ENCODE measurements at regions of chr14 and their contacts with region 1.

Region 1: GRCh38 chr14:55160989-55161388 is 30.4 kb downstream of the DLGAP5 start:
- DNase-seq: no peak
- H3K4me3 Mint-ChIP-seq: no peak overlapping the region
- H3K27ac Mint-ChIP-seq: no peak overlapping the region
- H3K4me1 Mint-ChIP-seq: peaks cover 23% of the 10 kb centered on the region
- H3K27me3 Mint-ChIP-seq: no peaks in the 10 kb centered on the region

Region 2: DNA sequence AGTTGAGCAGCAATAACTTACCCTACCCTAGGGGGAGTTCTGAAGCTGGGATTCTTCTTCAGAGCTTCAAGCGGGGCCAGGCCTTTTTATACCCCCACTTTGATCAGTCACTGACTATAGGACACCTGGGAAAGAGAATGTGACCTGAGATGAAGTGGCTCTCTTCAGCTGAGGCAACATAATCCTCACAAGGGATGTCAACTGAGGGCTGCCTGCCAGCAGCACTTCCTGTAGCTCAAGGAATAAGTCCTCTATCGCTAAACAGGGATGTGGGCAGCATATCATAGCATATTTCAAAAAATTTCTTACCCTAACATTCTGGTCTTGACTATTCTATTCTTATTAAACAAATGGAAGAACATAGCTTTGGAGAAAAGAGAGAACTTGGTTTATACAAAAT is 14.6 kb before region 1 on chr14:
- CTCF ChIA-PET with region 1: interaction called, 14 read pairs
- POLR2A ChIA-PET with region 1: no interaction called
- DNase-seq: no peak
- H3K4me3 Mint-ChIP-seq: no peak overlapping the region
- H3K27ac Mint-ChIP-seq: peak overlapping the region; percentile 5
- H3K4me1 Mint-ChIP-seq: peaks cover 21% of the 10 kb centered on the region
- H3K27me3 Mint-ChIP-seq: no peaks in the 10 kb centered on the region